Naive thymus-derived CD4-positive, alpha-beta T cell (primary cell): ENCODE measurements at regions of chr17 and their contacts with region 1.

Region 1: GRCh38 chr17:37609170-37610040 is at the start of gene SYNRG:
- DNase-seq: peak; percentile 92 to 96 (median 93)
- ATAC-seq: peak; percentile 93
- H3K4me3 ChIP-seq: peak within 1 kb of the TSS; percentile 58
- H3K4me3 Mint-ChIP-seq: peak within 1 kb of the TSS; percentile 74 to 97 (median 88)
- H3K27ac ChIP-seq: peak within 1 kb of the TSS; percentile 91
- H3K27ac Mint-ChIP-seq: peak within 1 kb of the TSS; percentile 82 to 95 (median 92)
- H3K4me1 ChIP-seq: peaks cover 31 to 32% of the 10 kb centered on the region in 2 donors
- H3K4me1 Mint-ChIP-seq: peaks cover 26 to 44% (median 38%) of the 10 kb centered on the region in 7 donors
- H3K27me3 ChIP-seq: no peaks in the 10 kb centered on the region
- H3K27me3 Mint-ChIP-seq: no peaks in the 10 kb centered on the region
- total RNA-seq, gene SYNRG: 85.0 to 146 (median 128) TPM

Region 2: DNA sequence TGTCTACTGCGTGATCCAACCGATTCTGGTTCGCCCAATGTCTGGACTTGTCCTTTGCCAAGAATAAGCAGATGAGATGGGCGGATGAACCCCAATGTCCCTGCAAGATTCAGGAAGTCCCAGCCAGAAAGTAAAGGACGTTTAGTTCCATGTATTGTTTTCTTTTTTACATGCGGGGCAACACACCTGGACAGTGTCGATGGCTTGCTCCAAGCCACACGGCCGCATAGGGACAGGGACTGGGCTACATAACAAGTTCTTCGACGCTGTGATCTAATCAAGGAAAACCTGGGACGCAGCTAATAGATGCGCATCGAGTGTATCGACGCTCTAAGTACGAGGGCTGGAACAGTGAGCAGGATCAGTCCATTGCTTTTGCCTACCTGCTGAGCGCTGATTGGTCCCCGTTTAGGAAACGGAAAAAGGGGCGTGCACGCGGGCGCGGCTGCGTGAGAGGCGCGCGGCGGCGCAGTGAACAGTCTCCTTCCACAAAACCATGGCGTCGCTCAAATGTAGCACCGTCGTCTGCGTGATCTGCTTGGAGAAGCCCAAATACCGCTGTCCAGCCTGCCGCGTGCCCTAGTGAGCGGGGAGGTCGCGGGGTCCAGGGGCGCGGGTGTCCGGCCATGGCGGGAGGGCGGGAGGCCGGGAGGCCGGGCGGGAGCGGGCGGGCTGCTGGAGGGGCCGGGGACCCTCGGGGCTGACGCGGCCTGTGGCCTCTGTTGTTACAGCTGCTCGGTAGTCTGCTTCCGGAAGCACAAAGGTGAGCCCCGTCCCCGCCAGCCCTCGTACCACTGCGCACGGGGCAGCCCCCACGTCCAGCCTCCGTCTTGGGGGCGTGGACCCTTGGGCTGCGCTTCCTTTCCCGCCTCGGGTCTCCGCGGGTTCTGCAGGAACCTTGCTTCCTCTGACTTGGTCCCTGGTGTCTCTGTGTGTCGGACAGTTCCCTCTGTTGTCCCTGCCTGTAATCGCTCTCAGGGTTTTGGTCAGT is 1122.9 kb before region 1 on chr17 and contains the start of gene ZNHIT3:
- CTCF ChIA-PET with region 1: no interaction called
- POLR2A ChIA-PET with region 1: no interaction called
- intact Hi-C with region 1: loop called in 1 of 2 experiments (anchors 5 kb)
- DNase-seq: peak; percentile 74 to 94 (median 91)
- ATAC-seq: peak; percentile 98
- H3K4me3 ChIP-seq: peak within 1 kb of the TSS; percentile 82
- H3K4me3 Mint-ChIP-seq: peak within 1 kb of the TSS; percentile 87 to 100 (median 100)
- H3K27ac ChIP-seq: peak within 1 kb of the TSS; percentile 86
- H3K27ac Mint-ChIP-seq: peak within 1 kb of the TSS; percentile 94 to 100 (median 99)
- H3K4me1 ChIP-seq: peaks cover 29 to 41% of the 10 kb centered on the region in 2 donors
- H3K4me1 Mint-ChIP-seq: peaks cover 39 to 70% (median 49%) of the 10 kb centered on the region in 7 donors
- H3K27me3 ChIP-seq: no peaks in the 10 kb centered on the region
- H3K27me3 Mint-ChIP-seq: peaks cover 8 to 11% (median 10%) of the 10 kb centered on the region in 5 donors
- total RNA-seq, gene ZNHIT3: 38.4 to 59.9 (median 57.4) TPM

Region 3: DNA sequence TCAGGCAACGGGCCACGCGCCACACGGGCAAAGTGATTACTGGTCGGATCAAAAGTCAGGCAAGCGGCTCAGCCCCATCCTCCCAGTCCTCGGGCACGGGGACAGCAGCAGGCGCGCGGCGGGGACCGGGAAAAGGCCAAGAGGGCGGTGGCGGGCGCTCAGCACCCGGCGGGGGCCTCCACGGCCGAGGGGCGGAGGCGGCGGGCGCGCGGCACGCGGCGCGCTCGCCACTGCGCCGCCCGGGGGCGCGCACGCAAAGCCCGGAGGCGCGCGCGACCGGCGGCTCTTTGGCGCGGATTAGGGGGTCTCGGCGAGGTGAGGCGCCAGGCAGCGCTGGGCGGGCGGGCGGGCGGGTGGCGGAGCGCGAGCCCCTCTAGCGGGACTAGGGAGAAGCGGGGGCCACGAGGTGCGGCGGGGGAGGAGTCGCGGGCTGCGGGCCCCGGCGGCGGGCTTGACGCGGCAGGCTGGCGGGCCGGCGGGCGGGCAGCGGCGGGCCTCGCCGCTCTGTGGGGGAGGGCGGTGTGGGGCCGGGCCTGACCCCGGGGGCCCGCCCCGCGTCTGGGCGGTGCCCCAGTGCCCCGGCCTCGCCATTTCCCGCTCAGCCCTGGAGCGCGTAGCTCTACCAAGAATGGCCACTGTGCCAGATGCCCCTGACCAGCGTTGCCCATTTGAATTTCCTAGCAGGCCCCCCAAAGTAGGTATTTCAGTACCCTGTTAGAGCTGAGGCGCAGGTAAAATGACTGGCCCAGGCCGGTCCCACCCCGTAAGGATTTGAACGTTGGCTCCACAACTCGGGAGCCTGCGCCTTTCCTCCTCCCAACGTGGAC is 202.6 kb before region 1 on chr17 and contains the starts of genes ACACA and TADA2A:
- CTCF ChIA-PET with region 1: no interaction called
- POLR2A ChIA-PET with region 1: interaction called, 4 read pairs
- intact Hi-C with region 1: loop called in 1 of 2 experiments (anchors 2 kb)
- DNase-seq: peak; percentile 52 to 86 (median 65)
- ATAC-seq: peak; percentile 95
- H3K4me3 ChIP-seq: peak within 1 kb of the TSS; percentile 99
- H3K4me3 Mint-ChIP-seq: peak within 1 kb of the TSS; percentile 94 to 98 (median 96)
- H3K27ac ChIP-seq: peak within 1 kb of the TSS; percentile 73
- H3K27ac Mint-ChIP-seq: peak within 1 kb of the TSS; percentile 84 to 98 (median 90)
- H3K4me1 ChIP-seq: peaks cover 5 to 11% of the 10 kb centered on the region in 2 donors
- H3K4me1 Mint-ChIP-seq: peaks cover 15 to 55% (median 46%) of the 10 kb centered on the region in 7 donors
- H3K27me3 ChIP-seq: no peaks in the 10 kb centered on the region
- H3K27me3 Mint-ChIP-seq: no peaks in the 10 kb centered on the region
- total RNA-seq, gene ACACA: 13.1 to 47.0 (median 24.0) TPM
- total RNA-seq, gene TADA2A: 15.2 to 41.3 (median 28.7) TPM

Region 4: DNA sequence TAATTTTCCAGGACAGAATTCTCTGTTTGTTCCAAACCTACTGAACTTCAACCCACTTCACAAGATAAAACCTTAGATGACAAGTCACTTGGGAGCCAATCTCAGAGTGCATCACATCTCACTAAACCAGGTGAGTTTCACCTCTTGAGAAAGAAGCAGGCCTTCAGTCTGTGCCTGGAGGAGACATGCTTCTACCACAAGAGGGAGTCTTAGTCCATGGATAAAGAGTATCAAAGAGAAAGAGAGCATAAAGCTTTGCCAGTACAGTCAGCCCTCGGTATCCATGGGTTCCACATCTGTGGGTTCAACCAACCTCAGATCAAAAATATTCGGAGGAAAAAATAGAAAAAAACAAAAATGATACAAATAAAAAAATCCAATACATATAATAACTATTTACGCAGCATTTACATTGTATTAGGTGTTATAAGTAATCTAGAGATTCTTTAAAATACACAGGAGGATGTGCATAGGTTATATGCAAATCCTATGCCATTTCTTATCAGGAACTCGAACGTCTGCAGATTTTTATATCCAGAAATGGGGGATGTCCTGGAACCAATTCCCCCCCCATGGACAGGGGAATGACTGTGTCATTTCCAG is 82.1 kb before region 1 on chr17:
- CTCF ChIA-PET with region 1: interaction called, 12 read pairs
- POLR2A ChIA-PET with region 1: no interaction called
- intact Hi-C with region 1: loop called in 1 of 2 experiments (anchors 1 kb)
- DNase-seq: peak in 7 of 9 donors; percentile 13 to 59 (median 49)
- ATAC-seq: peak; percentile 74
- H3K4me3 ChIP-seq: no peak overlapping the region
- H3K4me3 Mint-ChIP-seq: no peak overlapping the region
- H3K27ac ChIP-seq: no peak overlapping the region
- H3K27ac Mint-ChIP-seq: peak overlapping the region in 6 of 9 donors; percentile 12 to 52 (median 38)
- H3K4me1 ChIP-seq: no peaks in the 10 kb centered on the region
- H3K4me1 Mint-ChIP-seq: peaks cover 7 to 25% (median 15%) of the 10 kb centered on the region in 7 donors
- H3K27me3 ChIP-seq: no peaks in the 10 kb centered on the region
- H3K27me3 Mint-ChIP-seq: no peaks in the 10 kb centered on the region

Region 5: GRCh38 chr17:37570527-37571093 is 38.8 kb before region 1 on chr17:
- CTCF ChIA-PET with region 1: interaction called, 4 read pairs
- POLR2A ChIA-PET with region 1: no interaction called
- intact Hi-C with region 1: loop called in 1 of 2 experiments (anchors 5 kb)
- DNase-seq: peak in 5 of 9 donors; percentile 1 to 25 (median 6)
- ATAC-seq: peak; percentile 48
- H3K4me3 ChIP-seq: no peak overlapping the region
- H3K4me3 Mint-ChIP-seq: no peak overlapping the region
- H3K27ac ChIP-seq: no peak overlapping the region
- H3K27ac Mint-ChIP-seq: peak overlapping the region in 1 of 9 donors; percentile 41
- H3K4me1 ChIP-seq: no peaks in the 10 kb centered on the region
- H3K4me1 Mint-ChIP-seq: peaks cover 2 to 32% (median 11%) of the 10 kb centered on the region in 7 donors
- H3K27me3 ChIP-seq: no peaks in the 10 kb centered on the region
- H3K27me3 Mint-ChIP-seq: no peaks in the 10 kb centered on the region

Region 6: GRCh38 chr17:37643118-37643766 is 33.8 kb after region 1 on chr17 and contains the start of gene DDX52:
- CTCF ChIA-PET with region 1: interaction called, 4 read pairs
- POLR2A ChIA-PET with region 1: interaction called, 6 read pairs
- intact Hi-C with region 1: loop called (anchors 1 to 5 kb)
- DNase-seq: peak; percentile 75 to 88 (median 84)
- ATAC-seq: peak; percentile 99
- H3K4me3 ChIP-seq: peak within 1 kb of the TSS; percentile 89
- H3K4me3 Mint-ChIP-seq: peak within 1 kb of the TSS; percentile 89 to 98 (median 94)
- H3K27ac ChIP-seq: peak within 1 kb of the TSS; percentile 85
- H3K27ac Mint-ChIP-seq: peak within 1 kb of the TSS; percentile 63 to 97 (median 93)
- H3K4me1 ChIP-seq: peaks cover 8 to 10% of the 10 kb centered on the region in 2 donors
- H3K4me1 Mint-ChIP-seq: peaks cover 24 to 58% (median 39%) of the 10 kb centered on the region in 7 donors
- H3K27me3 ChIP-seq: peaks cover 0 to 9% of the 10 kb centered on the region in 2 donors
- H3K27me3 Mint-ChIP-seq: peaks cover 20 to 43% (median 30%) of the 10 kb centered on the region in 5 donors
- total RNA-seq, gene DDX52: 20.8 to 34.0 (median 29.3) TPM

Region 7: GRCh38 chr17:37828651-37829124 is 219.3 kb after region 1 on chr17:
- CTCF ChIA-PET with region 1: no interaction called
- POLR2A ChIA-PET with region 1: no interaction called
- intact Hi-C with region 1: no loop called
- DNase-seq: no peak
- ATAC-seq: no peak
- H3K4me3 ChIP-seq: no peak overlapping the region
- H3K4me3 Mint-ChIP-seq: peak overlapping the region in 1 of 10 donors; percentile 57
- H3K27ac ChIP-seq: no peak overlapping the region
- H3K27ac Mint-ChIP-seq: peak overlapping the region in 1 of 9 donors; percentile 72
- H3K4me1 ChIP-seq: no peaks in the 10 kb centered on the region
- H3K4me1 Mint-ChIP-seq: peaks cover 0 to 26% (median 6%) of the 10 kb centered on the region in 7 donors
- H3K27me3 ChIP-seq: no peaks in the 10 kb centered on the region
- H3K27me3 Mint-ChIP-seq: peaks cover 0 to 23% (median 19%) of the 10 kb centered on the region in 5 donors